ENCODE measurements at regions of chr19 and their contacts with region 1.

Region 1: GRCh38 chr19:13887517-13887916 is 10.6 kb downstream of the NANOS3 start:
- DNase-seq: no peak
- H3K4me3 ChIP-seq: no peak overlapping the region
- H3K27ac ChIP-seq: peak overlapping the region; percentile 88
- H3K4me1 ChIP-seq: peaks cover 54% of the 10 kb centered on the region
- H3K27me3 ChIP-seq: no peaks in the 10 kb centered on the region
- CTCF ChIP-seq: no peak
- POLR2A ChIP-seq: no peak

Region 2: DNA sequence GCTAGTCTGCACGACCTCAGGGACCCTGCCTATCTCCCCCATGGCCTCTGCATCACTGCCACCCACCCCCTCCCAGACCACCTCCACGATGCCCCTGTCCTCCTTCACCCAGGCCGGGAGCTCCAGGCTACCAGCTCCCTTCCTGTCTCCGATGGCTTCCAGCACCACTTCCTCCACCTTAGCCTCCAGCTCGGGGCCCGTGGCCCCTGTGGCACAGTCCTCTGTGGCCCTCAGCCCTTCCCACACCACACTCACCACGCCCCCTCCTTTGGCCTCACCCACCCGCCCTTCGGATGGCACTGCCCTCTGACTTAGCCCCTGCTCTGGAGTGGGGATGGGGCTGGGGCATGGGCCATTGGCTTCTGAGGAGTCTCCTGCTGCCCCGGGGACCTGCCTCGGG is 167.2 kb after region 1 on chr19:
- intact Hi-C with region 1: loop called (anchors 5 kb)
- DNase-seq: no peak
- H3K4me3 ChIP-seq: no peak overlapping the region
- H3K27ac ChIP-seq: no peak overlapping the region
- H3K4me1 ChIP-seq: peaks cover 12% of the 10 kb centered on the region
- H3K27me3 ChIP-seq: no peaks in the 10 kb centered on the region
- CTCF ChIP-seq: no peak
- POLR2A ChIP-seq: no peak